ENCODE measurements at regions of chr11 and their contacts with region 1.

Region 1: GRCh38 chr11:57800444-57801182 is 39.0 kb downstream of the CTNND1 start:
- DNase-seq: peak; percentile 85
- H3K4me3 ChIP-seq: no peak overlapping the region
- H3K27ac ChIP-seq: peak overlapping the region; percentile 53
- H3K4me1 ChIP-seq: peaks cover 32% of the 10 kb centered on the region
- H3K27me3 ChIP-seq: no peaks in the 10 kb centered on the region

Region 2: DNA sequence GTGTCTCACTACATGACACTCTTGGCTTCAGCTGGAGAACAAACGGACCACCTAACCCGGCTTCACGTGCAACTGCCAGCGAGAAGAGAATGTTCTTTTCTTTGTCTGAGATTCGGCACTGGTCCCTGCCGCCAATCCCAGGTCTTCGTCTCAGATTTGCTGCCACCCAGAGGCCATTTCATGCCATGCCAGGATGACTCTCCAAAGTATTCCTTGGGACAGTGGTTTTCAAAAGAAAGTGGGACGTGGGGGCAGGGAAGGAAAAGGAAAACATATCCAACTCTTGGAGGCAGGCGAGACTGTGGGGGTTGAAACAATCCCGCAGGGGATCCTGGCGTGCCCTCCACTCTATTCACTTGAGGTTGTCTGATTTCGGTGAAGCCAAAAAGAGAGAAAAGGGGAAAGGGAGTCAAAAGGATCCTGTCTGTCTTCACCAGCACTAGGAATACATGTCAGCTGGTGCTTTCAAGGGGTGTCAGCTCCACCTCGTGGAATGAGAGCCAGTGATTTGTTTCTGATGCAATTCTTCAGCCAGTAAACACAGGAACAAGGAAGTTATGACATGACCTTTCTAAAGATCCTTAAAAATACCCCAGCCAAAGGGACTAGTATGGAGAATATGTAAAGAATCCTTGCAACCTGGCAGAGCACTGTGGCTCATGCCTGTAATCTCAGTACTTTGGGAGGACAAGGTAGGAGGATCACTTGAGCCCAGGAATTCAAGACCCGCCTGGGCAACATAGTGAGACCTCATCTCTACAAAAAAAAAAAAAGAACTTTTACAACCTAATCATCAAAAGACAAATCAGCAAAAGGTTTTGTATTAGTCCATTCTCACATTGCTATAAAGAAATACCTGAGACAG is 522.5 kb before region 1 on chr11:
- in situ Hi-C with region 1: no loop called
- DNase-seq: peak; percentile 90
- H3K4me3 ChIP-seq: peak overlapping the region; percentile 30; the same call in 1 of the 2 replicates
- H3K27ac ChIP-seq: peak overlapping the region; percentile 94
- H3K4me1 ChIP-seq: peaks cover 57% of the 10 kb centered on the region
- H3K27me3 ChIP-seq: no peaks in the 10 kb centered on the region

Region 3: GRCh38 chr11:57474017-57474802 is 326.4 kb before region 1 on chr11:
- in situ Hi-C with region 1: no loop called
- DNase-seq: peak; percentile 32
- H3K4me3 ChIP-seq: no peak overlapping the region
- H3K27ac ChIP-seq: no peak overlapping the region
- H3K4me1 ChIP-seq: no peaks in the 10 kb centered on the region
- H3K27me3 ChIP-seq: no peaks in the 10 kb centered on the region

Region 4: GRCh38 chr11:57751676-57752253 is 48.8 kb before region 1 on chr11 and contains the start of gene BTBD18:
- in situ Hi-C with region 1: loop called (anchors 10 kb)
- DNase-seq: peak; percentile 82
- H3K4me3 ChIP-seq: no peak within 1 kb of the TSS
- H3K27ac ChIP-seq: no peak within 1 kb of the TSS
- H3K4me1 ChIP-seq: no peaks in the 10 kb centered on the region
- H3K27me3 ChIP-seq: no peaks in the 10 kb centered on the region
- total RNA-seq, gene BTBD18: not detected in 2 replicates